A549 (cell line): ENCODE measurements at regions of chr2 and their contacts with region 1.

Region 1: DNA sequence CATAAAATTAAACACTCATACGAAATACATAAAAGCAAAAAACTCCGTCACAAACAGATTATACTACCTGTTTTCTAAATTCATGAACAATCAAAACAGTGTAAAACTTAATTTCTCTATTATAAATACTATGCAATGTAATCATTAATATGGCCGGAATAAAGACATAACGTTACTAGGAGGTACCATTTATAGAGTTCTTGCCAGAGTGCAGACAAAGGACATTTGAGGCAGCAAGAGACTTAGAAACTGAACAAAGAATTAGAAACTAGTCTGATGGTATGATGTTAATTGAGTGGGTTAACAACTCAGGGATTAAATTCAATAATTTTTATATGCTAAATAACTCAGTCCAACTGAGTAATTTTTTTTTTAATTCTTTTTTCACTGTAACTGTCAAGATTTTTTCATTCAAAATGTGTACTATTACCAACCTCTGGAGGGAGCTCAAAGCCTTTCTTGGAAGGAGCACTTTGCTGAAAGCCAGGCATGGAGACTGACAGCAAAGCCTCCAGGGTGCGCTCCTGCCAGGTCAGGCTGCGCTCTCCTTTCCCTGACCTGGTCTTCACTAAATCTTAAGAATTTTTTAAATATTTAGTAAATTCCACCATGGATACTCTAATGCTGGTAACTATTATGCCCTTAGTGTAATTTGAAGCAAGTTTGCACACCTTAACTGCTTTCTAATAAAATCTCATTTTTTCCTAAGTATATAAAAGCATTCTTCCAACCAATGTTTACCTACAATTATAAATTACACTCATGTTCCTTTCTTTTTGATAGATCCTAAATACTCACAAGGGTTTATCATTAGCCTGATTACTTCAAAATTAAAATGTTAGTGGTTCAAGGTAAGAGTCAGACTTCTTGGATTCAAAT is 34.1 kb downstream of the WDR35 start:
- DNase-seq: peak; percentile 78 to 90
- ATAC-seq: peak; percentile 100
- H3K4me3 ChIP-seq: no peak overlapping the region
- H3K27ac ChIP-seq: no peak overlapping the region
- H3K4me1 ChIP-seq: no peaks in the 10 kb centered on the region; the same call in 2 of the 3 replicates
- CTCF ChIP-seq: peak; percentile 100
- EP300 ChIP-seq: no peak
- POLR2A ChIP-seq: no peak
- RAD21 ChIP-seq: peak; percentile 98

Region 2: DNA sequence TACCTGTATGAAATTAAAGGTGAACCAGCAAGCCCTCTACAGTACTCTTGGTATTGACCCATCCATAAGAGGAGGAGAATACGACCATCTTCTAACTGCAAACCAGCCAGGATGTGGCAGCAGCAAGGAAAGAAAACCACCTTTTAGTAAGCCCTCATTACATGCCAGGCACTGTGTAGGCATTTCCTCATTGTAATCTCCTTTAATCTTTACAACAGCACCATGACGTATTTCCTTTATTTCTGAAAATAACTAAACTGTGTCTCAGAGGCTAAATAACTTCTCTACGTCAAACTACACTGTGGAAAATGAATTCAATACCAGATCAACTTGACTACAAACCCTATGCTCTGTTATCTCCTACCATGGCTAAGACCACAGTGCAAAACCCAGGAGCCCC is 15.9 kb after region 1 on chr2:
- CTCF ChIA-PET with region 1: interaction called, 14 read pairs
- POLR2A ChIA-PET with region 1: no interaction called
- DNase-seq: no peak
- ATAC-seq: no peak
- H3K4me3 ChIP-seq: no peak overlapping the region
- H3K27ac ChIP-seq: no peak overlapping the region
- H3K4me1 ChIP-seq: no peaks in the 10 kb centered on the region
- CTCF ChIP-seq: no peak
- EP300 ChIP-seq: no peak
- POLR2A ChIP-seq: no peak
- RAD21 ChIP-seq: no peak

Region 3: GRCh38 chr2:20097879-20098714 is 142.3 kb after region 1 on chr2:
- CTCF ChIA-PET with region 1: interaction called, 83 read pairs
- POLR2A ChIA-PET with region 1: interaction called, 3 read pairs
- DNase-seq: peak; percentile 93 to 96
- ATAC-seq: peak; percentile 84 to 90
- H3K4me3 ChIP-seq: no peak overlapping the region
- H3K27ac ChIP-seq: peak overlapping the region; percentile 22 to 71; a peak in 4 of 6 replicates
- H3K4me1 ChIP-seq: peaks cover 18% of the 10 kb centered on the region; the same call in 2 of the 3 replicates
- CTCF ChIP-seq: peak; percentile 99
- EP300 ChIP-seq: no peak
- POLR2A ChIP-seq: no peak
- RAD21 ChIP-seq: peak; percentile 99 to 100

Region 4: DNA sequence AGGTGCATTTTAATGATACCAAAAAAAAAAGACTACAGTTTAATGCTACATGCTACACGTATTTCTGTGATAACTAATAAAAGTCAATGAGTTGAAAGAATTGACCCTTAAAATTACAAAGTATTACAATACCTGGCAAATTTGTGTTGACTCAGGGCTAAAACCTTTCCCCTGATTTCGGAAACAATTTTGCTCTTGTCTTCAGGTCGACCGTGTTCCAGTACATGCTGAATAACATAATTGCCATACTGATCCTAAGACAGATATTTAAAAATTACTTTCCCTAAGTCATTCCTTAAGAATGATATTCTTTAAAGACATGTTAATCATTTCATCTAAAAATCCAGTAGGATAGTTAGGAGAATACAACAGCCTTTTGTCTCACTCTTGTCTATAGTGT is 298.9 kb after region 1 on chr2:
- CTCF ChIA-PET with region 1: no interaction called
- POLR2A ChIA-PET with region 1: no interaction called
- DNase-seq: no peak
- ATAC-seq: no peak
- H3K4me3 ChIP-seq: no peak overlapping the region
- H3K27ac ChIP-seq: no peak overlapping the region
- H3K4me1 ChIP-seq: no peaks in the 10 kb centered on the region
- CTCF ChIP-seq: no peak
- EP300 ChIP-seq: no peak
- POLR2A ChIP-seq: no peak
- RAD21 ChIP-seq: no peak